Cardiac septum (tissue), 1 donor: ENCODE measurements at regions of chr20 and their contacts with region 1.

Region 1: GRCh38 chr20:44475694-44476560 is at the start of gene TTPAL:
- DNase-seq: peak; percentile 95
- total RNA-seq, gene TTPAL: 5.3 TPM

Region 2: GRCh38 chr20:44460795-44461141 is 15.2 kb before region 1 on chr20:
- intact Hi-C with region 1: no loop called
- DNase-seq: no peak

Region 3: DNA sequence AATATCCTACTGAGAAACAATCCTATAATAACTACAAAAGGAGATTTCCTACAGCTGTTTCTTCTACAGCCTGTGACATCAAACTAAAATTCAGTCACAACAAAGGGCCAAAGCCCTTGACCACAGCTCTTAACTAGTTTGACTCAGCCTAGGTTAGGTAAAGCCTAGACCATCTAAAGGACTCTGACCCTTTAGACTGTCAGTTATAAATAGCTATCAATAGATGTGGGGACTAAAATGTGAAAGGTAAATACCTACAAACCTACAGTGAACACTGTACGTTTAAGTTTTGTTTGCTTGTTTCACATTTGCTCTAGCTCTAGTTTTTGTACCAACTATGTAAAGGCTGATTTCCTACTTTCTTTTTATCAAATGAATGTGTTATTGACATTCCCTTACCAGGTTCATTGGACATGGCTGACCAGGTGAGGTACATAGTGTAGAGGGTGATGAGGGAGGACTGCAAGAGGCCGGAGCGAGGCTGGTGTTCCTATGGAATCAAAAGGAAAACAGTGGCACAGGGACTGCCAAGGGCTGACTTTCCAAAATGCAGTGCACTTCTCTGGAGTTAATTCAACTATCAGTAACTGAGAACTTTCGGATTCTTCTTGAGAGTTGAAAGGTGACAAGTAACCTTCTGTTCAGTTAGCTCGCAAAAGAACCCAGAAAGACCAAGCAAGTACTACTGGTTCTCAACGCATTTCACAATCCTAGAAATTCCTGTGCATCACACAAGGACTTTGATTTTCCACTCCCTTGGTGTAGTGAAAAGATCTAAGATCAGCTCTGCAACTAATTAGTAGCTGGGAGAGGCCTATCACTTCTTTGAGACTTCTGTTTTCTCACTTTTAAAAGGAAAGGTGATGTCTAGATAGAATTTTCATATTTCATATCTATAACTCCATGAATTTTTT is 28.7 kb after region 1 on chr20:
- intact Hi-C with region 1: no loop called
- DNase-seq: no peak

Region 4: DNA sequence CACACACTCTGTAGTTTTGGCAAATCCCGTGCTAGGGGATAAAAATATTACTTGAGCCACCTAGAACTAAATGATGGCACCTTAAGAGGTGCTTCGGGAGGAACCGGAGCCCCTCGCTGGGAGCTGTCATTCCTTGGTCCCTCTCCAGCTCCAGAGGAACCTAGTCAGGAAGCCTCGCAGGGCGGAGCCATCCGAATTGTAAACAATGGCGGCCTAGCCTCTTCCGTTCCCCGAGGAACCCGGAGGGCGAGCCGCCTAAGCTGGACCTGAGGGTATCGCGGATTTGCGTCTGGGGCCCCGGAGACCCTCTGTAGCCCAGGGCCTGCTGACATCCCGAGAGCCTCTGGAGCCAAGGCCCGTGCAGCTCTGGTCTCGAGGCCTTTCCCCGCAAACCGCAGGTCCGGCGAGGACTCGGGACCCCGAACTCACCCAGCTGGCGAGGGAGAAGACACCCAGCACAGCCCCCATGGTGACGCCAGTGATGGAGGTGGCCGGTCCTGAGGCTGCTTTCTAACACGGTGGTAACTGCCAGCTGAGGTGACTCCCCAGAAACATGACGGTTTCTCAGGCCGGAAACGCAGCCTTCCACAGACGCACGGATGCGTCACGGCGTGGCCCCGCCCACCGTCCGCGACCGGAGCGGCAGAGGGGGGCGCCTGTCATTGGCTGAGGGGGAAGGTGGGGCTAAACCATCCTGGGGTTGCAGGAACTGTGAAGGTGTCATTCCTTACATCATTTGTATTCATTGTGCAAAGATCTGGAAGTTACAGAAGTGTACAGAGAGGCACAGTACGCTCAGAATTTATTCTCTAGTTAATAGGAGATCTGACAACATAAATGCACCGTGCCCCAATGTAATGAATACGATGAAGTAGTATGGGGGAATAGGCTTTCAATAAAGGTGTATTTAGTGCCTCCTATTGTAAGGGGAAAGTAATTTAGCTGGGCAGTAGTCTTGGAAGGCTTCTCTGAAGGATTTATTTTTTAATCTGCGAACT is 45.9 kb after region 1 on chr20 and contains the start of gene SERINC3:
- intact Hi-C with region 1: loop called (anchors 5 kb)
- DNase-seq: peak; percentile 98
- total RNA-seq, gene SERINC3: 94.3 TPM